ENCODE measurements at regions of chr9 and their contacts with region 1.

Region 1: DNA sequence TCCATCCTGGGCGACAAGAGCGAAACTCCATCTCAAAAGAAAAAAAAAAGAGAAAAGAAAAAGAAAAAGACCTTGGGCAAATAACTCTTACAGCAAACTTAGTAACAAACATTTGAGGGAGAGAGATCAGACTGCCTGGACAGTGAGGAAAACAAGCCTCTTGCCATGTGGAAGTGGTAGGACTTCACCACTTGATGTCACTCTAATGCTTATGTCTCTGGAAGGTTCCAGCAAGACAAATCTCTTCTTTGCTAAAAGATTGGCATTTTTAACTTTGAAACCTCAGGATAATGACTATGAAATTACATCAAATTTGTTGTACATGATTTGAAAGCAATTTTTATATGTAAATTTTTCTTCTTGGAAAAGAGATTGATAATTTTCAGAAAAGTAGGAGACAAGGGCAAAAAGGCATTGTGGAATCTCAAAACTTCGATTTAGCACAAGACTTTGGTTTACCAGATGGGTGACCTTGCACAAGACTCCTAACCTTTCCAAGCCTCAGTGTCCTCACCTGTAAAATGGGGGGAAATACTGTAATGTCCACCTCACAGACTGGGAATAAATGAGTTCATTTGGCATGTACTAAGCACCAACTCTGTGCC is 5.4 kb downstream of the ACTL7B start:
- DNase-seq: peak; percentile 37
- H3K4me3 ChIP-seq: no peak overlapping the region
- H3K27ac ChIP-seq: no peak overlapping the region
- H3K4me1 ChIP-seq: peaks cover 2% of the 10 kb centered on the region
- H3K27me3 ChIP-seq: no peaks in the 10 kb centered on the region
- CTCF ChIP-seq: peak; percentile 54 to 76

Region 2: GRCh38 chr9:108869092-108869725 is 18.8 kb after region 1 on chr9:
- CTCF ChIA-PET with region 1: no interaction called
- dilution Hi-C with region 1: no loop called
- in situ Hi-C with region 1: no loop called
- intact Hi-C with region 1: loop called (anchors 1 kb)
- DNase-seq: peak; percentile 65
- H3K4me3 ChIP-seq: no peak overlapping the region
- H3K27ac ChIP-seq: peak overlapping the region; percentile 69
- H3K4me1 ChIP-seq: peaks cover 21% of the 10 kb centered on the region
- H3K27me3 ChIP-seq: no peaks in the 10 kb centered on the region
- CTCF ChIP-seq: no peak

Region 3: DNA sequence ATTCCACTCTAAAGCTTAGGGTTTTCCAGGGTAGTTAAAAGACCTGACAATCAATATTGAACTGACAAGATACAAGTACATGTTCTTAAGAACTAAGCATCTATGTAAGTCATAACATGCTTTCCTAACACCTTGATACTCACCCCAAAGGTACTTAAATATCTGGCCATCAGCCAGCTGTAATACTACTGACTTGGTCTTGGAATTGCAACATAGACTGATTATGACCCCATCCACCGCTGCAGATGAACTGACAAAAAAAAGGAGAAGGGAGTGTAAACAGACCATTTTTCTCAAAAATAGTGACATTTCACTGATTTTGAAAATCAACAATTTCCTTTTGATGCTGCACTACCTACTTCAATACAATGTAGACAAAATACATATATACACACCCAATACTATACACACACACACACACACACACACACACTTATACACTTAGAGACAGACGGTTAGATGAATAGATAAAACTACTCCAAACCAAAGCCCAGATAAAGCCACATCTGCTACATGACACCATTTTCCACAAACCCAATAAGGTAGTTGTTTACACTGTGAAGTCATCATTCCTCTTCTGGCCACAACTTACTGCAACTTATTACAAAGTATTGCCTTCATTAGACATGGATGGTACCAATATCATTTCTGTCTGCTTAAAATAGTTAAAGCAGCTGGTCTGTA is 53.2 kb after region 1 on chr9:
- CTCF ChIA-PET with region 1: no interaction called
- dilution Hi-C with region 1: no loop called
- in situ Hi-C with region 1: no loop called
- intact Hi-C with region 1: no loop called
- DNase-seq: no peak
- H3K4me3 ChIP-seq: no peak overlapping the region
- H3K27ac ChIP-seq: no peak overlapping the region
- H3K4me1 ChIP-seq: no peaks in the 10 kb centered on the region
- H3K27me3 ChIP-seq: no peaks in the 10 kb centered on the region
- CTCF ChIP-seq: no peak

Region 4: DNA sequence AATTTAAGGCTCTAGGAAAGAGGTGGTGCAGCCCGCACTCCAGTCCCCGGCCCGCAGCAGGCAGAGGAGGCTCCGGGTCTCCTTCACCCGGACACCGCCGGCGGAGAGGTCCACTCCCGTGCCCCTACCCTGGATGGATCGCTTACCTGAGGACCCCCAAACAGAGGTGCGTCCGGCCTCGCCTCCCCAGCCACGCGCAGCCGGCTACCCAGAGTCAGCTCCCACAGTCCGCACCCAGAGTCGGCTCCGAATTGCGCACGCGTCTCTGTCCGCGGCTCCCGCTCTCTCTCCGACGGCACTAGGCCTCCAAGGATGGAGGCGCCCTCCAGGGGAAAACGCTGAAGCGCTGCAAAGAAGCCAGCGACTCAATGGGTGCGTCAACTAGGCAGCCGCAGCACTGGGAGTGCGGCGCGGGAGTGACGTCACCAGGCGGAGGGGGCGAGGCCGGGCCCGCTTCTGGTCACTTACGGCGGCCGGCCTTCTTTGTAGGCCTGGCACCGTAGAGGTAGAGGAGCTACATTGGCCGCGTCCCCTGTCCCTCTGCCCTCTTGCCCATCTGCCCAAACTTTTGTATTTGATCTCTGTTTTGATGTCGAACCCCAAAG is 83.4 kb after region 1 on chr9 and contains the start of gene ELP1:
- CTCF ChIA-PET with region 1: no interaction called
- dilution Hi-C with region 1: no loop called
- in situ Hi-C with region 1: no loop called
- intact Hi-C with region 1: loop called (anchors 1 kb)
- DNase-seq: peak; percentile 94
- H3K4me3 ChIP-seq: peak within 1 kb of the TSS; percentile 76 to 93 (median 91)
- H3K27ac ChIP-seq: peak within 1 kb of the TSS; percentile 80
- H3K4me1 ChIP-seq: peaks cover 14% of the 10 kb centered on the region
- H3K27me3 ChIP-seq: no peaks in the 10 kb centered on the region
- CTCF ChIP-seq: peak in 1 of 2 donors; percentile 53
- total RNA-seq, gene ELP1: 24.2 to 30.2 TPM

Region 5: DNA sequence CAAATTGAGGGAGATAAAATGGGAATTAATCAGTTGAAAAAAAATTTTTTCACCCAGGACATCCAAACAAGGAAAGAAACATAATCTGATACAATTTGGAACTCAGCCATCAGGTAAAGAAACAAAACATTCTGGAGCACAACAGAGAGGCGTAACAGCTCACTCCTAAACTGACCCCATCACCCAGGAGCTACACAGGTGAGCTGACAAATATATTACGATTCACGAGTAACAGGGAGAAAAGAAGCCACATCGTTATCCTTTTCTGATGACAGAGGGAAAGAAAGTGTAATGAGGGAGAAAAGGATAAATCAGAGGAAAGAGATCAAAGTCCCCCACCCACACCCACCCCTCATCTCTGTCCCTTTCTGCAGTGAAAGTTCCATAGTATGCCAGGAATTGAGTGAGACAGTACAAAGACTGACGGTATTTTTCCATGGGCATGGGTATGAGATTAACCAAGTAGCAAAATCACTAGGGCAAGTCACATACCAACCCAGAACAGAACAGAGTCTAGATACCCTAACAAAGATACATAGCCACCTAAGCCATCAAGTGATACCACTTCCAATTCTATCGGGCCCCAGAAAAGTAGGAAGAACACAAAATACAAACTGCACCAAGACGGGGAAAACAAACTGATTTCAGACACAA is 224.0 kb after region 1 on chr9:
- CTCF ChIA-PET with region 1: no interaction called
- dilution Hi-C with region 1: no loop called
- in situ Hi-C with region 1: no loop called
- intact Hi-C with region 1: no loop called
- DNase-seq: no peak
- H3K4me3 ChIP-seq: no peak overlapping the region
- H3K27ac ChIP-seq: no peak overlapping the region
- H3K4me1 ChIP-seq: peaks cover 3% of the 10 kb centered on the region
- H3K27me3 ChIP-seq: no peaks in the 10 kb centered on the region
- CTCF ChIP-seq: no peak

Region 6: GRCh38 chr9:109119439-109120203 is 269.2 kb after region 1 on chr9 and contains the start of gene TMEM245:
- CTCF ChIA-PET with region 1: no interaction called
- dilution Hi-C with region 1: no loop called
- in situ Hi-C with region 1: no loop called
- intact Hi-C with region 1: loop called (anchors 10 kb)
- DNase-seq: peak; percentile 99
- H3K4me3 ChIP-seq: peak within 1 kb of the TSS; percentile 70 to 91 (median 89)
- H3K27ac ChIP-seq: peak within 1 kb of the TSS; percentile 46
- H3K4me1 ChIP-seq: peaks cover 15% of the 10 kb centered on the region
- H3K27me3 ChIP-seq: no peaks in the 10 kb centered on the region
- CTCF ChIP-seq: no peak
- total RNA-seq, gene TMEM245: 33.1 to 70.3 TPM

Region 7: GRCh38 chr9:109401168-109401989 is 551.0 kb after region 1 on chr9:
- CTCF ChIA-PET with region 1: no interaction called
- dilution Hi-C with region 1: no loop called
- in situ Hi-C with region 1: no loop called
- intact Hi-C with region 1: loop called (anchors 1 kb)
- DNase-seq: peak; percentile 53
- H3K4me3 ChIP-seq: no peak overlapping the region
- H3K27ac ChIP-seq: no peak overlapping the region
- H3K4me1 ChIP-seq: no peaks in the 10 kb centered on the region
- H3K27me3 ChIP-seq: no peaks in the 10 kb centered on the region
- CTCF ChIP-seq: peak; percentile 88 to 94